ENCODE measurements at regions of chr10 and their contacts with region 1.

Region 1: DNA sequence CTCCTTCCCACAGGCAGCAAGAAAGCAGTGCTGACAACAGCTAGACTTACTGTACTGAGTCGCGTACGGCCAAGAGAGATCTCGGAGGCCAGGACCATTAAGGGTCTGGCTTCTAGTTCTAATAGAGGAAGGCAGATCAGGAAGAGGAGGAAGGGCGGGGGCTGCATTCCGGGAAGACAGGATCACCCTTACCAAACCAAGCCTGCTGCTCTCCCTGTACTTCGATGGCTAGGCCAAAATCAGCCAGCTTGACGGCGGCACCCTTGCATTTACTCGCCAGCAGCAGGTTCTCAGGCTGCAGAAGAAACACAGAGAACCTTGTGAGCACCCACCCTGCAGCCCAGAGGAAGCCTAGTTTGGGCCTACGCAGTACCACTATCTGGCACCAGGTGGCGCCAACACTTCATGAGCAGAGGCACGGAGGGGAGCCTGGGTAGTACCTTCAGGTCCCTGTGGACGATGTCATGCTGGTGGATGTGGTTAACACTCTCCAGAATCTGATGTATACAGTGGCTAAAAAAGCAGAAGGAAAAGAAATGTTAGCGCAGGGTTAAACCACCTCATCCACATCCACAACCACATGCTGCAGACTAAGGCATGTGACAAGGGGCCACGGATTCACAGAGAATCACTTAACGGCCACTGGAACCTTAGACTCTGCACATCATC is 25.4 kb downstream of the CAMK2G start:
- DNase-seq: peak; percentile 93
- CTCF ChIP-seq: peak; percentile 99

Region 2: DNA sequence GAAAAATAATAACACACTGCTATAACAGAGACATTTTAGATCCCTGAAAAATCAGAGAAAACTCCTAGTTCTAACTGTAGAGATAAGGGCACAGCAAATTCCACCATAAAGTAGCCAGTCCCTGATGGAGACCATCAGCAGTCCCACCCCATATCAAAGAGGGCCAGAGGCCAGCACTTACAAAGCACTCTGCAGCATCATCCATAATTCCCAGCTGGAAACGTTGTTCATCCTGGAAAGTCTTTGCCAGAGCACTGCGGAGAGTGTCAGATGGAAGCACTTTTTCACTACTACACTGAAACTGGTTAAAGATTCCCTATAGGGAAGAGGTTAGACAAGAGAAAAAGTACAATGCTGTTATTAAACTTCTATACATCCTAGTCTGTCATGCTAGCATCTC is 303.6 kb before region 1 on chr10:
- CTCF ChIA-PET with region 1: no interaction called
- POLR2A ChIA-PET with region 1: no interaction called
- DNase-seq: no peak
- CTCF ChIP-seq: no peak

Region 3: DNA sequence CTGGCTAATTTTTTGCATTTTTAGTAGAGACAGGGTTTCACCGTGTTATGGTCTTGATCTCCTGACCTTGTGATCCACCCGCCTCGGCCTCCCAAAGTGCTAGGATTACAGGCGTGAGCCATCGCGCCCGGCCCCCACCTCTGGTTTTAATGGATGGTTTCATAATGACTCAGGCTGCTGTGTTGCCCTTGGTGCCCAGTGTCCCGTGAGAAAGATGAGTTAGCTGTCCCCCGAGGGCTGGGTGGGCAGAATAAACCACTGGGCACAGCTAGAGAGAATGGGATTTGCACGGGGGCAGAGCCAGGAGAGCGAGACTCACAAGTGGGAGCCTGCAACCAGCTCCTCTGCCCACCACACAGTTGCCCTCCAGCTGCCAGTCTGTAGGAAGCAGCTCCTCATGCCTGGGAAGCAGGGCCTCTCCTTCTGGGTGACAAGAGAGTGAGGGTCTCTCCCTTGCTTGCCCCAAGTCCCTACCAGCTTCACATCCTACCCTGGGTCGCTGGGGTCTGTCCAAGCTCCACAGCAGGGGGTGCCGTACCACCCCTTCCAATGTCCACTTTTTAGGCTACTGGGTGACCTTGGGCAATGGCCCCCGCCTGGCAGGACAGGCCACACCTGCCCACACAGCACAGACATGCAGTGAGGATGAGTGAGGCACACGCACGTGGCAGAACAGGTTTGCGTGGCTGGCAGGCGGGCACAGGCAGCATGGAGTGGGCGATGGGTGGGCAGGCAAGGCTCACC is 21.4 kb before region 1 on chr10:
- CTCF ChIA-PET with region 1: interaction called, 13 read pairs
- POLR2A ChIA-PET with region 1: no interaction called
- DNase-seq: no peak
- CTCF ChIP-seq: no peak

Region 4: GRCh38 chr10:73837072-73837471 is 11.9 kb before region 1 on chr10:
- CTCF ChIA-PET with region 1: interaction called, 29 read pairs
- POLR2A ChIA-PET with region 1: no interaction called
- DNase-seq: no peak
- CTCF ChIP-seq: no peak

Region 5: GRCh38 chr10:73865459-73866442 is 16.8 kb after region 1 on chr10:
- CTCF ChIA-PET with region 1: interaction called, 20 read pairs
- POLR2A ChIA-PET with region 1: no interaction called
- DNase-seq: peak; percentile 75
- CTCF ChIP-seq: no peak

Measured in GM10248 (cell line).